Naive thymus-derived CD4-positive, alpha-beta T cell (primary cell): ENCODE measurements at regions of chr2 and their contacts with region 1.

Region 1: DNA sequence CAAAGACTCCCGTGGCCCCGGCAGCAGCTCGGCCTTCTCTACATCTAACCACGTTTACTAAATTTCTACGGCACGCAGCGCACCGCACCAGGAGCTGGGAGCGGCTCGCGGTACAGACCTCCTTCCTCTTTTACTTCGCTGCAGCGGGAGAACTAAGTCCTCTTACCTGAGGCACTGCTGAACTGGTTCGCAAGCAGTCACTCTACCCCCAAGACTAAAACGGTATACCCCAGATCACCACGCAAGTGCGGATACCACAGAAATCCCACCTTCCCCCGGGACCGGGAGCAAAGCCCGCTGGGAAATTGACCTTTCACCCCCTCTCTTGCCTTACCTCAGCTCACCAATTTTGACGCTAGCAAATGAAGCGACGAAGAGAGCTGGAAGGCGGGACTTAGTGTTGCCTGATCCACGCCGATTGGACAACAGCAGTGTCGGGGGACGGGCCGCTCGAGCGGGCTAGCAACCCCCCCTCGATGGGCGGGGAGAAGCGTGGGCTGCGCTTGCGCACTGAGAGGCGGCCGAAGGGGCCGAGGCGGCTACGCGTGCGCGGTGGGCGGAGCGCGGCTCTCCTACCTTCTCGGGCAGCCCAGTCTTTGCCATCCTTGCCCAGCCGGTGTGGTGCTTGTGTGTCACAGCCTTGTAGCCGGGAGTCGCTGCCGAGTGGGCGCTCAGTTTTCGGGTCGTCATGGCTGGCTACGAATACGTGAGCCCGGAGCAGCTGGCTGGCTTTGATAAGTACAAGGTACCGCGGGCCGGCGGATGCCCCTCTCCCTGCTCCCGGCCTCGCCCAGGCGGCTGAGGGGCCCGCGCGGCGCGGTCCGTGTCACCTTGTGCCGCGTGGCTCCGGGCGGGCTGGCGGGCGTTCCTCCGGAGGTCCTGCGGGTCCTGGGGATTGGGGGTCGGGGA is at the start of gene SELENOI:
- DNase-seq: peak; percentile 99 to 100 (median 99)
- ATAC-seq: peak; percentile 97
- H3K4me3 ChIP-seq: peak within 1 kb of the TSS; percentile 81
- H3K4me3 Mint-ChIP-seq: peak within 1 kb of the TSS; percentile 84 to 100 (median 98)
- H3K27ac ChIP-seq: peak within 1 kb of the TSS; percentile 88
- H3K27ac Mint-ChIP-seq: peak within 1 kb of the TSS; percentile 95 to 100 (median 99)
- H3K4me1 ChIP-seq: peaks cover 24 to 25% of the 10 kb centered on the region in 2 donors
- H3K4me1 Mint-ChIP-seq: peaks cover 28 to 62% (median 40%) of the 10 kb centered on the region in 7 donors
- H3K27me3 ChIP-seq: no peaks in the 10 kb centered on the region
- H3K27me3 Mint-ChIP-seq: no peaks in the 10 kb centered on the region
- total RNA-seq, gene SELENOI: 19.0 to 33.6 (median 22.4) TPM

Region 2: DNA sequence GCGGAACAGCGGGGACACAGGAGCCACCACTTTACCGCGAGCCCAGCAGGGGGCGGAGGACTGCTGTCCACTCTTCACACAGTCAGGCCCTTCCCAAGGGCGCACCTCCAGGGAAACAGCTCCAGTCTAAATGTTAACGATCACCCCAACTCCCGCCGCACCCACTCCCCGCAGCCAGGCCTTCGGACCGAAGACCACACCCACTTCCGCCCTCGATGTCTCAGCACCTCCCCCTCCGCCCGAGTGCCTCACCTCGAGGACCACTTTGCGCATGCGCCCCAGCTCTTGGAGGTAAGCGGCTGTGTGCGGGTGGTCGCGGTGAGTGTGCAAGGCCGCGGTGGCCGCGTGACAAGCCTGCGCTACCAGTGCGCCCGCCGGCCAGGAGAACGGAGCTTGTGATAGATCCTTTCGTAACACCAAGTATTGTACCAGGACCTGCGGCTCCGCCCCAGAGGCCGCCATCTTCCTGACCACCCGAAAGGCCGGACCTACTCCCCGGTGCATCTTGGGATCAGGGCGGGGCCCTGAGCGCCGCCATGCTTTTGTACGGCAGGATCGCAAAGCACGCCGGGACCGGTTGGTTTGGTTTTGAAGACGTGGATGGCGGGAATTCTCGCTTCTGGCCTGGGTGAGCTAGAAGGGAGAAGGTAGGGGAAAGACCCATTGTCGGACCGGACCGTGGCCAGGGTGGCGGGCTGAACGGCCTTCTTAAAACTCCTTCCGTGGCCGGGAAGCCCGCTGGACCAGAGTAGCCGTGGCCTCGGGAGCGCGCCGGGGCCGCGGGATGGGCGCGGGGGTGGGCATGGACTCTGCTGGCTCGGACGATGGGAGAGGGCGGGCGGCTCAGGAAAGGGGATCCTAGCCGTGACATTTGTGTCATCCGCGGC is 1552.7 kb before region 1 on chr2 and contains the starts of genes CENPO and PTRHD1:
- CTCF ChIA-PET with region 1: no interaction called
- POLR2A ChIA-PET with region 1: no interaction called
- intact Hi-C with region 1: loop called in 1 of 2 experiments (anchors 1 kb)
- DNase-seq: peak; percentile 93 to 99 (median 97)
- ATAC-seq: peak; percentile 98
- H3K4me3 ChIP-seq: peak within 1 kb of the TSS; percentile 97
- H3K4me3 Mint-ChIP-seq: peak within 1 kb of the TSS; percentile 95 to 100 (median 98)
- H3K27ac ChIP-seq: peak within 1 kb of the TSS; percentile 96
- H3K27ac Mint-ChIP-seq: peak within 1 kb of the TSS; percentile 99 to 100 (median 99)
- H3K4me1 ChIP-seq: peaks cover 6 to 10% of the 10 kb centered on the region in 2 donors
- H3K4me1 Mint-ChIP-seq: peaks cover 5 to 53% (median 20%) of the 10 kb centered on the region in 7 donors
- H3K27me3 ChIP-seq: no peaks in the 10 kb centered on the region
- H3K27me3 Mint-ChIP-seq: no peaks in the 10 kb centered on the region
- total RNA-seq, gene CENPO: 3.6 to 36.6 (median 6.0) TPM
- total RNA-seq, gene PTRHD1: 14.3 to 31.5 (median 17.1) TPM

Region 3: DNA sequence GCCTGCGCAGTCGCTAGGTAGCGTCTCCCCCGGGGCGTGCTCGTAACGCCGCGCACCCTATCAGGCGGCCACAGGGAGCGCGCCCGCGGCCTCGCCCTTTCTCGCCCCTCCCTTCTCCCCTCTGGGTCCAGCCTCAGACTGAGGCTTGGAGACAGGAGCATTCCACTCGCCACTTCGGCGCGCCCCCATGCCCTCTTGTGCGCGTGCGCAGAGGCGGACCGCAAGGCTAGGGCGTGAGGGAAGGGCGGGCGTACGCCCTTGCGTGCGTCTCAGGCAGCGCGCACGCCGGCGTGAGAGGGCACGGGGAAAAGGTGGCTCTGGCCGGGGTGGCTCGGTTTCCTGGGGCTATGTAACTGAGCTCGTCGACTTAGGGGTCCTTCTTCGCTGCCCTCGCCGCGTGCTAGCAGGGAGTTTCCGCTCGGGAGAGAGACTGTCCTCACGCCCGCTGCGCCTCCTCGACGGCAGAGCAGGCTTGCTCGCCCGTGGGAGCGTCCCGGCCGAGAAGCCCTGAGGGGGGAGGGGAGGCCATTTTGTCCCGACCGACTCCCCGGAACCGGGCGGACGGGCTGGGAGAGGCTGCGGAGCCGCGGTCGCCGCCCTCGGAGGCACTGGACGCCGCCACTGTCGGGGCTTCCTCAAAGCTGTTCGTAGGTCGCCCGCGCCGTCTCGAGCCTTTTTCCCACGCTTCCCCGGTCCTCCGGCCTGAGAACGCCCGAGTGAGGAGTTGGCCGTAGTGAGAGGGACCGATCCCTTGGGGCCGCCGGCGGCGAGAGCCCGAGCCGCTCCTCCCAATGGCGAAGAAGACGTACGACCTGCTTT is 311.8 kb before region 1 on chr2 and contains the start of gene RAB10:
- CTCF ChIA-PET with region 1: no interaction called
- POLR2A ChIA-PET with region 1: interaction called, 8 read pairs
- intact Hi-C with region 1: loop called (anchors 1 kb)
- DNase-seq: peak; percentile 98 to 100 (median 99)
- ATAC-seq: peak; percentile 95
- H3K4me3 ChIP-seq: peak within 1 kb of the TSS; percentile 96
- H3K4me3 Mint-ChIP-seq: peak within 1 kb of the TSS; percentile 90 to 99 (median 96)
- H3K27ac ChIP-seq: peak within 1 kb of the TSS; percentile 90
- H3K27ac Mint-ChIP-seq: peak within 1 kb of the TSS; percentile 86 to 97 (median 95)
- H3K4me1 ChIP-seq: peaks cover 18 to 24% of the 10 kb centered on the region in 2 donors
- H3K4me1 Mint-ChIP-seq: peaks cover 31 to 48% (median 41%) of the 10 kb centered on the region in 7 donors
- H3K27me3 ChIP-seq: no peaks in the 10 kb centered on the region
- H3K27me3 Mint-ChIP-seq: peaks cover 0 to 2% (median 0%) of the 10 kb centered on the region in 5 donors
- total RNA-seq, gene RAB10: 25.6 to 108 (median 60.5) TPM

Region 4: DNA sequence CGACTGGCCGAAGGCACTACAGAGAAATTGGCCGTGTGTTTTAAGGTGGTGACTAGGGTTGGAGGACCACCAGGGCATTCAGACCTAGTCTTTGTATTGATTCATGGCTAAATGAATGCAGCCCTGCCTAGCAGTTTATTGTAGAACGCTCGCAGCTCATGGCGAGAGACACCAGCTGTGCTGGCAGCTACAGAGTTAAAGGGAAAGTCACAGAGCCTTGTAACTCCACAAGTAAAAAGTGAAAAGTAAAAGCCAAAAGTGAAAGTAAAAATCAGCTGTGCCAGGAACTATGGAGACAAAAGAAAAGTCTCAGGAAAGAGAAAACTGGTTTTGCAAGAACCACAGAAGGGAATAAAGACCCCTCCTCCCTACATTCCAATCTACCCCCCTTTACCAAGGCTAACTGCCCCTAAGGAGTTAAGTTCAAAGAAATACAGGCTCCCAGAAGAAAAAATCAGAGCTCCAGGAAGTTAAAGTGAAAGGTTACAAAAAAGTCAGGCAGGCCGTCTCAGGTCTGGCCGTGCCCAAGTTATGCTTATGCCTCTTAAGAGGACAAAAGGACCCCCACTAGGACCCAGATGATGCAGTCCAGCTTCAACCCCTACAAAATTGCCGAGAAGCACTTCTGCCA is 46.2 kb before region 1 on chr2:
- CTCF ChIA-PET with region 1: no interaction called
- POLR2A ChIA-PET with region 1: interaction called, 33 read pairs
- intact Hi-C with region 1: loop called (anchors 1 kb)
- DNase-seq: peak in 7 of 9 donors; percentile 39 to 58 (median 51)
- ATAC-seq: peak; percentile 46
- H3K4me3 ChIP-seq: peak overlapping the region; percentile 78
- H3K4me3 Mint-ChIP-seq: no peak overlapping the region
- H3K27ac ChIP-seq: peak overlapping the region; percentile 84
- H3K27ac Mint-ChIP-seq: no peak overlapping the region
- H3K4me1 ChIP-seq: peaks cover 7 to 15% of the 10 kb centered on the region in 2 donors
- H3K4me1 Mint-ChIP-seq: peaks cover 0 to 8% (median 0%) of the 10 kb centered on the region in 7 donors
- H3K27me3 ChIP-seq: no peaks in the 10 kb centered on the region
- H3K27me3 Mint-ChIP-seq: peaks cover 0 to 29% (median 0%) of the 10 kb centered on the region in 5 donors

Region 5: GRCh38 chr2:26764078-26764887 is 418.5 kb after region 1 on chr2 and contains the start of gene SLC35F6:
- CTCF ChIA-PET with region 1: no interaction called
- POLR2A ChIA-PET with region 1: no interaction called
- intact Hi-C with region 1: loop called (anchors 5 kb)
- DNase-seq: peak; percentile 70 to 90 (median 86)
- ATAC-seq: peak; percentile 95
- H3K4me3 ChIP-seq: peak within 1 kb of the TSS; percentile 92
- H3K4me3 Mint-ChIP-seq: peak within 1 kb of the TSS; percentile 85 to 97 (median 94)
- H3K27ac ChIP-seq: peak within 1 kb of the TSS; percentile 82
- H3K27ac Mint-ChIP-seq: peak within 1 kb of the TSS; percentile 62 to 97 (median 91)
- H3K4me1 ChIP-seq: peaks cover 23% of the 10 kb centered on the region in 2 donors
- H3K4me1 Mint-ChIP-seq: peaks cover 28 to 54% (median 39%) of the 10 kb centered on the region in 7 donors
- H3K27me3 ChIP-seq: no peaks in the 10 kb centered on the region
- H3K27me3 Mint-ChIP-seq: peaks cover 0 to 6% (median 0%) of the 10 kb centered on the region in 5 donors
- total RNA-seq, gene SLC35F6: 17.3 to 22.5 (median 19.9) TPM

Region 6: GRCh38 chr2:27211829-27212627 is 866.2 kb after region 1 on chr2 and contains the starts of genes ATRAID and SLC5A6:
- CTCF ChIA-PET with region 1: no interaction called
- POLR2A ChIA-PET with region 1: no interaction called
- intact Hi-C with region 1: loop called (anchors 2 to 5 kb)
- DNase-seq: peak; percentile 86 to 93 (median 92)
- ATAC-seq: peak; percentile 93
- H3K4me3 ChIP-seq: peak within 1 kb of the TSS; percentile 91
- H3K4me3 Mint-ChIP-seq: peak within 1 kb of the TSS; percentile 89 to 100 (median 99)
- H3K27ac ChIP-seq: peak within 1 kb of the TSS; percentile 100
- H3K27ac Mint-ChIP-seq: peak within 1 kb of the TSS; percentile 99 to 100 (median 100)
- H3K4me1 ChIP-seq: peaks cover 14 to 17% of the 10 kb centered on the region in 2 donors
- H3K4me1 Mint-ChIP-seq: peaks cover 18 to 49% (median 42%) of the 10 kb centered on the region in 7 donors
- H3K27me3 ChIP-seq: no peaks in the 10 kb centered on the region
- H3K27me3 Mint-ChIP-seq: no peaks in the 10 kb centered on the region
- total RNA-seq, gene ATRAID: 71.0 to 113 (median 90.7) TPM
- total RNA-seq, gene SLC5A6: 25.6 to 203 (median 44.3) TPM